Activated CD8-positive, alpha-beta T cell treated with anti-CD3 and anti-CD28 coated beads for 36 hours (primary cell): ENCODE measurements at regions of chr5 and their contacts with region 1.

Region 1: GRCh38 chr5:177351385-177352329 is at the start of gene LMAN2:
- DNase-seq: peak; percentile 96
- ATAC-seq: peak; percentile 98
- H3K4me3 Mint-ChIP-seq: peak within 1 kb of the TSS; percentile 93
- H3K27ac Mint-ChIP-seq: peak within 1 kb of the TSS; percentile 100
- H3K4me1 Mint-ChIP-seq: peaks cover 54% of the 10 kb centered on the region
- H3K27me3 Mint-ChIP-seq: no peaks in the 10 kb centered on the region
- CTCF ChIP-seq: no peak
- total RNA-seq, gene LMAN2: 79.9 to 87.5 TPM

Region 2: DNA sequence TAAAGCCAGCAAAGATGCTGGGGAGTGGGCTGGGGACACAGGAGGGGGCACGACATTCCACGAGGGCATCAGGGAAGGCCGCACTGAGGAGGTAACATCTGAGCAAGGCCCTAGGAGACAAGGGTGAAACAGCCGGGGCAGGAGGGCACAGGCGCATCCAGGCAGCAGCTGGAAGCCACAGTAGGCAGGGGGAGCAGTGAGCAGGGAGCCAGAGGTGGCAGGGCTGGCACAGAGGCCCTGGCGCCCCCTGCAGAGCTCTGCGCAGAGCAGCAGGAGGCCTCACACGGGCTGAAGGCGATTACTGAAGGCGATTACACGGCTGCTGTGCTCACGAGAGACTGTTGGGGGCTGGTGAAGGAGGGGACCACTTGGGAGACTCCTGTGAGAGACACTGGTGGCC is 15.5 kb before region 1 on chr5:
- CTCF ChIA-PET with region 1: interaction called, 11 read pairs
- POLR2A ChIA-PET with region 1: interaction called, 8 read pairs
- intact Hi-C with region 1: no loop called
- DNase-seq: peak; percentile 62
- ATAC-seq: peak; percentile 92
- H3K4me3 Mint-ChIP-seq: no peak overlapping the region
- H3K27ac Mint-ChIP-seq: peak overlapping the region; percentile 24
- H3K4me1 Mint-ChIP-seq: peaks cover 12% of the 10 kb centered on the region
- H3K27me3 Mint-ChIP-seq: no peaks in the 10 kb centered on the region
- CTCF ChIP-seq: peak; percentile 64

Region 3: DNA sequence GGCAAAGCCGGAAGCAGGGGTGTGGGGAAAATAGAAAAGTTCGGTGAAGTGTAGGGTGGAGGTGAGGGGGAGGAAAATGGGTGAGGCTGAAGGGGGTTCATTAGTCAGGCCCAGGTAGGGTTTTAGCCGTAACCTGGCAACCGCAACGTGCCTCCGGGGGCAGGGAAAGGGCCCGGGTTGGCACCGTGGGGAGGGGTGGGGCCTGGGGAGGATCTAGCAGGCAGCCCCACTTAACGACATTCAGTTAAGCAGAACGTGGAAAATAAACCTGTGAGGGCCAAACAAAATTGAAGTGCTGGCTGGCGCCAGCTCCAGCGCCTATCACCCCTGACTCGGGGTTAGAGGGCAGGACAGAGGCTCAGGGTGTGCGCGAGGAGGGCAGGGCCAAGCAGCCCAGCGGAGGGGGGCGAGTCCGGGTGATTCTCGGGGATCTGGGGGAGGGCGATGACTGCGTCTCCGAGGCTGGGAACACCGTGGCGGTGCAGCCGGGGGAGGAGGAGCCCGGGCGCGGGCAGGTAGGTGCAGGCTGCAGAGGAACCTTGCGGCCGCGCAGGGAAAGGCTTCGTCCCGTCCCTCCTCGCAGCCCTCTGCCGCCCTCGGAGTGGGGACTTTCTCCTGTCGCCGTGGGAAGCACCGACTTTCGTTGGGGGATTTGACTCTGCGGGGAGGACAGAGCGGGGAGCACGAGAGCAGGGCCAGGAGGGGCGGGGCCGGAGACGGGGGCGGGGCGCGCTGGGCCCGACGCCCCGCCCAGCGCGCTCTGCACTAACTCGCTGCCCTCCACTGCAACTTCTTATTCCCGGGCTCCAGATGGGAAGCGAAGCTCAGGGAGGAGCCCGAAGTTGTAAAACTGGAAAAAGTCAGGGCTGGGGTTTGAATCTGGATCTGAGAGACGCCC is 11.2 kb after region 1 on chr5:
- CTCF ChIA-PET with region 1: interaction called, 55 read pairs
- POLR2A ChIA-PET with region 1: interaction called, 19 read pairs
- intact Hi-C with region 1: no loop called
- DNase-seq: peak; percentile 80
- ATAC-seq: peak; percentile 72
- H3K4me3 Mint-ChIP-seq: peak overlapping the region; percentile 73
- H3K27ac Mint-ChIP-seq: peak overlapping the region; percentile 77
- H3K4me1 Mint-ChIP-seq: peaks cover 71% of the 10 kb centered on the region
- H3K27me3 Mint-ChIP-seq: no peaks in the 10 kb centered on the region
- CTCF ChIP-seq: no peak

Region 4: DNA sequence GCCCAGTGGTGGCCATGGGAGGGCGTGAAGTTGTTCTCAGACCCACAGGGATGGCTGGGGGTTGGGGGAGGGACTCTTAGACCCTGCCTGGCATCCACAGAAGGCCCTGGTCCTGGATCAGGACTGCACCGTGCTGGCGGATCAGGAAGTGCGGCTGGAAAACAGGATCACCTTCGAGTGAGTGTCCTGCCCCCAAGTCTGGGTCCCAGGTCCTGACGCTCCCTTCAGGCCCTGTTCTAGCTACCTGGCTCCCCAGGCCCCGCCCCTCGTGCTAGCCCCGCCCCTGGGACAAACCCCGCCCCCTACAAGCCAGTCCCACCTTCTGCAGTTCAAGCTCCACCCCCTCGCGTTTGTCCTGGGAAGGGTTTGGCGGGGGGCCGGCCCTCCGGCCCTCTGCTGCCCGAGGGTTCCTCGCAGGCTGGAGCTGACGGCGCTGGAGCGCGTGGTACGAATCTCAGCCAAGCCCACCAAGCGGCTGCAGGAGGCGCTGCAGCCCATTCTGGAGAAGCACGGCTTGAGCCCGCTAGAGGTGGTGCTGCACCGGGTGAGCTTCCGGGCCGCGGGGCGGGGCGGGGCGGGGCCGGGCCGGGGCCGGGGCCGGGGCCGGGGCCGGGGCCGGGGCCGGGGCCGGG is 18.9 kb after region 1 on chr5:
- CTCF ChIA-PET with region 1: interaction called, 55 read pairs
- POLR2A ChIA-PET with region 1: interaction called, 9 read pairs
- intact Hi-C with region 1: no loop called
- DNase-seq: peak; percentile 63
- ATAC-seq: peak; percentile 65
- H3K4me3 Mint-ChIP-seq: no peak overlapping the region
- H3K27ac Mint-ChIP-seq: no peak overlapping the region
- H3K4me1 Mint-ChIP-seq: peaks cover 58% of the 10 kb centered on the region
- H3K27me3 Mint-ChIP-seq: no peaks in the 10 kb centered on the region
- CTCF ChIP-seq: no peak